ENCODE measurements at regions of chr13 and their contacts with region 1.

Region 1: DNA sequence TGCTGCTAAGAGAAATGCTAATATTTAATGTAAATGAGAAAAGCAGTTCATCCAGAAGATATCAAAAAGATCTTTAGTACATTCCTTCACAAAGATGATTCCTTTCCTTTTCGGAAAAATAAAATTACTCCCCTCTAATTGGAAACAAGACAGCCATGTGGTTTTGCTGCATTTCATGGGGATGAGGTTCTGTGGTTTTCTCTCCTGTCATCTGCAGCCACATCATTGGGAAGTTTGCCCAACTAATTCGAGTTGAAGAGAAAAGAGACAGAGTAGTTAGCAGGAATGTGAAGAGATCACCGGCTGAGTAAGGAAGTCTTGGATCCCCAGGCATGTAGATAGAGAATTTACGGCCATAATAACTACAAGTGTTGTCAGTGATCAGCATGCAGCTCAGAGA is 122.1 kb downstream of the CYSLTR2 start:
- DNase-seq: no peak
- ATAC-seq: no peak
- H3K4me3 ChIP-seq: no peak overlapping the region
- H3K27ac ChIP-seq: no peak overlapping the region
- H3K4me1 ChIP-seq: peaks cover 0 to 6% (median 0%) of the 10 kb centered on the region in 9 donors
- H3K27me3 ChIP-seq: no peaks in the 10 kb centered on the region
- CTCF ChIP-seq: no peak

Region 2: GRCh38 chr13:48319531-48320398 is 456.0 kb before region 1 on chr13:
- intact Hi-C with region 1: loop called in 1 of 10 experiments (anchors 10 kb)
- DNase-seq: no peak
- ATAC-seq: no peak
- H3K4me3 ChIP-seq: peak overlapping the region in 5 of 10 donors; percentile 40 to 48 (median 43)
- H3K27ac ChIP-seq: no peak overlapping the region
- H3K4me1 ChIP-seq: peaks cover 0 to 21% (median 11%) of the 10 kb centered on the region in 9 donors
- H3K27me3 ChIP-seq: no peaks in the 10 kb centered on the region
- CTCF ChIP-seq: no peak

Region 3: GRCh38 chr13:48334534-48335127 is 441.2 kb before region 1 on chr13:
- intact Hi-C with region 1: loop called in 3 of 10 experiments (anchors 5 to 10 kb)
- DNase-seq: no peak
- ATAC-seq: peak in 7 of 8 donors; percentile 41 to 83 (median 73)
- H3K4me3 ChIP-seq: no peak overlapping the region
- H3K27ac ChIP-seq: no peak overlapping the region
- H3K4me1 ChIP-seq: peaks cover 0 to 27% (median 6%) of the 10 kb centered on the region in 9 donors
- H3K27me3 ChIP-seq: no peaks in the 10 kb centered on the region
- CTCF ChIP-seq: peak; percentile 31 to 85 (median 70)

Region 4: DNA sequence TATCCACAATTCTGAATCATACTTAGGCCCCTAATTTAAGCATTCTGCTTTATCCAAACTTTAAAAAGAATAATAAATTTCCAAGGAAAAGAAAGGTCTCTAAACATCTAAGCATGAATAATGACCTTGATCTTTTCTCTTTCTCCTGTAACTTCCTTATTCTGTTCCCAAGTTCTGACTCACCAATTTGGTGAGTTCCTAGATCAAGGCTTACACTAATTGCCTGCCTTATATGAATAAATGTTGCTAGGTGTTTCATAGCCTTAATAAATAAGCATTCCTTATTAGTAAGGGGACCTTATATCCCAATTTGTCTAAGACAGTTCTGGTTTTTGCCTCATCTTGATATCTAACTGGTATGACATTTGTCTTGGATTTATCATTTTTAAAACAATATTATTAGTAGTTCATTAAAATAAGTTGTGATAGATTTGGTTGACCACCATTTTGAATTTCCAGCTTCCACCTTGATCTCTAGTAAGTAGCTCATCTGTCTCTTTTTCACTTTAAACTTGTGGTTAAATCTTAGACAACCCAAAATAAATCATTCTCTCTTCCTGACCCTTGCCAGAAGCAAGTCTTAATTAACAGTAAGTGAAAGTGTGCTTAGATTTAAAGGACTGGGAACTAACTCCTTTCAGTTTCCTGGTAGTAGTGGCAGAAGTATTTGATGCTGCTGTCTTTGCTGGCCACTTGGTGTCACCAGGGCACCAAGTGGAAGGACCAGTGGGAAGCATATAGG is 323.1 kb after region 1 on chr13:
- intact Hi-C with region 1: loop called in 2 of 10 experiments (anchors 10 kb)
- DNase-seq: no peak
- ATAC-seq: peak in 4 of 8 donors; percentile 59 to 68 (median 62)
- H3K4me3 ChIP-seq: no peak overlapping the region
- H3K27ac ChIP-seq: peak overlapping the region; percentile 37 to 84 (median 76)
- H3K4me1 ChIP-seq: peaks cover 10 to 40% (median 30%) of the 10 kb centered on the region in 9 donors
- H3K27me3 ChIP-seq: no peaks in the 10 kb centered on the region
- CTCF ChIP-seq: peak; percentile 11 to 69 (median 50)

Measured in heart right ventricle (tissue), 16 donors.